Heart left ventricle (tissue), 16 donors: ENCODE measurements at regions of chr1 and their contacts with region 1.

Region 1: DNA sequence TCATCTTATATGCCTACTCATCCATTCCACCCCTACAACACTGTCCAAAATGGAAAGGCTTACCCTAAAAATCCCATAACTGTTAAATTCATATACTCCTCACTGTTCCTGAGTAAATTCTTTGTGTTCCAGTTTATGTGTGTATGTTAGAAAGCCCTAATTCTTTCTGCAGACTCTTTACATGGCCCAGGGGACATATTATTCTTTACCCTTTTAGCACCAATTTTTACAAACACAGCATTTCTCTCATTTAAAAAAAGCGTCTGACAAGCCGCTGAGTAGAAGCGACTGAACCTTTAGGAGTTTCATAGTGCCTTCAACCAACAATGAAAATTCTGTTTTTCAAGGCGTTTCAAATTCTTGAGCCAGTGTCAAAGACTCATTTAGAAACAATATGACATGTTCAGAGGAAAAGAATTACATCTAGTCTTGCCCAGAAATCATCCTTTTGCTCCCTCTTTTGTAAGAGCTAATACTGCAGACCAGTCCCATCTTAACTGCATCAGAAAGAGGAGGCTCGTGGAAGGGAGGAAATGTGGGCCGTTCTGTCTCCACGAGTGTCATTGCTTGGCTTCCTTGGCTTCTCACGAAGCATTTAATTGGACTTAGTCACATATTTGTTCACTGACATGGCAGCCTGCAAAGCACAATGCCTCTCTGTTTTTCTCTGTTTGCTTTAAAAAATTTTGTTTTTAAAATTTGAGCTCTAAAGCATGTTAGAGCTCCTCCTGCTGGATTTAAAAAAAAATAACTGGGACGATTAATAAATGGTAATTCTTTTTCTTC is 21.3 kb upstream of the C1orf105 start:
- DNase-seq: peak in 4 of 5 donors; percentile 41 to 66 (median 54)
- ATAC-seq: peak; percentile 70 to 90 (median 86)
- H3K4me3 ChIP-seq: peak overlapping the region in 6 of 12 donors; percentile 8 to 22 (median 14)
- H3K27ac ChIP-seq: peak overlapping the region in 11 of 12 donors; percentile 19 to 78 (median 68)
- H3K4me1 ChIP-seq: peaks cover 0 to 57% (median 30%) of the 10 kb centered on the region in 12 donors
- H3K27me3 ChIP-seq: no peaks in the 10 kb centered on the region
- CTCF ChIP-seq: peak; percentile 50 to 82 (median 67)
- POLR2A ChIP-seq: no peak

Region 2: DNA sequence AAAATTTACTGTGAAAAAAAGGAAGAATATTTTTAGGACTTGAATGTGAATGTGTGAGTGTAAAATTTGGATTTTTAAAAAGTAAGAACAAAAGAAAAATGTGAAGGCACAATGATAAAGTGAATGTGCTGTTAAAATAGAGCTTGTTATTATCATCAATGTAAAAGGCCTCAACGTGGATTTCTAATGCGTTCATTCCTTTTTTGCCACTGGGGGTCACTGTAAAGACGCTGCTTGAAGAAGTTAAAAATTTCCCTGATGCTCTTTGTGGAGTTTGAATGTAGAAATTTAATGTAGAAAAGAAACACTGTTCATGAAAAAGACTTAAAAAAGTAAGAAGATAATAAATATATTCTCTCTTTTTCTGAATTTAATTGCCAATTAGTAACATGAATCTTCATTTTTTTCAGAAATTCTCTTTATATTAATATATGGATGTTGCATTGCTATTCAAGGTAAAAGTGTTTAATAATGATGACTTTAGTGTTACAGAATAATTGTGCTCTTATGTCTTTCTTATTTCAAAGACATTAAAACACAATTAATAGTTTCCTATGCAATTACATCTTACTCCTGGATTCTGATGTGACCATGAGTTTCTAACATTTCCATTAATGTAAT is 396.3 kb before region 1 on chr1:
- intact Hi-C with region 1: loop called in 4 of 10 experiments (anchors 2 to 5 kb)
- DNase-seq: peak in 1 of 5 donors; percentile 14
- ATAC-seq: no peak
- H3K4me3 ChIP-seq: no peak overlapping the region
- H3K27ac ChIP-seq: no peak overlapping the region
- H3K4me1 ChIP-seq: no peaks in the 10 kb centered on the region
- H3K27me3 ChIP-seq: no peaks in the 10 kb centered on the region
- CTCF ChIP-seq: peak; percentile 41 to 79 (median 62)
- POLR2A ChIP-seq: no peak

Region 3: GRCh38 chr1:172089768-172090510 is 309.2 kb before region 1 on chr1:
- intact Hi-C with region 1: loop called (anchors 1 to 5 kb)
- DNase-seq: peak; percentile 14 to 61 (median 43)
- ATAC-seq: peak; percentile 64 to 85 (median 76)
- H3K4me3 ChIP-seq: no peak overlapping the region
- H3K27ac ChIP-seq: no peak overlapping the region
- H3K4me1 ChIP-seq: no peaks in the 10 kb centered on the region
- H3K27me3 ChIP-seq: no peaks in the 10 kb centered on the region
- CTCF ChIP-seq: peak; percentile 43 to 74 (median 66)
- POLR2A ChIP-seq: no peak

Region 4: GRCh38 chr1:172144445-172145061 is 254.6 kb before region 1 on chr1:
- intact Hi-C with region 1: loop called in 6 of 10 experiments (anchors 2 to 10 kb)
- DNase-seq: peak; percentile 80 to 87 (median 85)
- ATAC-seq: peak; percentile 95 to 96 (median 96)
- H3K4me3 ChIP-seq: peak overlapping the region; percentile 25 to 70 (median 56)
- H3K27ac ChIP-seq: peak overlapping the region; percentile 70 to 89 (median 84)
- H3K4me1 ChIP-seq: peaks cover 0 to 39% (median 5%) of the 10 kb centered on the region in 12 donors
- H3K27me3 ChIP-seq: no peaks in the 10 kb centered on the region
- CTCF ChIP-seq: no peak
- POLR2A ChIP-seq: peak in 1 of 2 donors; percentile 86

Region 5: DNA sequence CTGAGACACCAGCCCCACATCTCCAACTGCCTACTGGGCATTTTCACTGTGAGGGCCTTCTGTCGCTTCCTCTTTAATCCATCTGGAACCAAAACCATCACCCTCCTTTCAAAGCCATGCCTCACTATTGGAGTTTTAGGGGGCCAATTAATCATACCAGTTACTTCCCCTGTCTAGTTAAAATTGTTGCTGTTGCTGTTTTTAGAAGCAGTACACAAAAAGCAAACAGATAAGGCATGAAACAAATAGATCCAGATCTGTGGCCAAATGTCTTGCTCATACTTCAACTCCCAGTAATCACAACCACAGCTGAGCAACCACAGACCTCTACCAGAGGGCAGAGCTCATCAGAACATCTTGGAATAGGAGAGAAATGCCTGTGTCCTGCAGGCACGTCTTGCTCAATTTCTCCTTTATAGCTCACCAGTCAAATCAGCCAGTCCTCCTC is 112.5 kb before region 1 on chr1:
- intact Hi-C with region 1: loop called in 2 of 10 experiments (anchors 10 kb)
- DNase-seq: peak in 1 of 5 donors; percentile 41
- ATAC-seq: peak; percentile 59 to 92 (median 76)
- H3K4me3 ChIP-seq: no peak overlapping the region
- H3K27ac ChIP-seq: peak overlapping the region in 9 of 12 donors; percentile 3 to 77 (median 35)
- H3K4me1 ChIP-seq: peaks cover 0 to 23% (median 12%) of the 10 kb centered on the region in 12 donors
- H3K27me3 ChIP-seq: no peaks in the 10 kb centered on the region
- CTCF ChIP-seq: no peak
- POLR2A ChIP-seq: no peak

Region 6: DNA sequence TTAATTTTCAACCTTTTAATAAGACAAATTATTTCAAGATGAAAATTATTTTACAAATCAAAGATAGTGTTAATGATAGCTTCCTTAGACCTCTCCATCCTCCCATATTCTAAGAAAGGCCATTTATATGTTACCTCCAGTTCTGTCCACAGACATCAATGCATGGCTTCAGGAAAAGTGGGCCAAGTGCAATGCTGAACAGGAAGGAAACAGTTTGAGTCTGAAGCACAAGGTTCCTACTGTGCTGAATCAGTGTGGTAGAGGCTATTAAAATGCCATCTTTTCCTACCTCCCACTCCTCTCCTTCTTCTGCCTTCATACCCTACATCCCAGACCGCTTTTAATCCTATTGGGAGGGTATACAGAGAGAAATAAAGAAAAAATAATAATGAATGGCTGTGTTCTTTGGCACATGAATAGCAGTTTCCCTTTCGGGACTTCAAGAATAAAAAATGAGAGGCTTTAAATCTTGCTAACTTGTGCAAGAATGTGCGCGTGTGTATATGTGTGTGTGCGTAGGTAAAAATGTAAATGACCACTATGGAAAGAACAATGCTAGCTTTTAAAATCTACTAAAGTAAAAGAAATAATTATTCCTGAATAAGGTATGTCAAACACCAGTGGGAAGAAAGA is 41.3 kb before region 1 on chr1:
- intact Hi-C with region 1: loop called in 5 of 10 experiments (anchors 2 to 5 kb)
- DNase-seq: no peak
- ATAC-seq: peak in 2 of 4 donors; percentile 5 to 26
- H3K4me3 ChIP-seq: peak overlapping the region in 7 of 12 donors; percentile 0 to 37 (median 12)
- H3K27ac ChIP-seq: peak overlapping the region; percentile 42 to 91 (median 76)
- H3K4me1 ChIP-seq: peaks cover 6 to 63% (median 39%) of the 10 kb centered on the region in 12 donors
- H3K27me3 ChIP-seq: no peaks in the 10 kb centered on the region
- CTCF ChIP-seq: no peak
- POLR2A ChIP-seq: no peak

Region 7: GRCh38 chr1:172561252-172561651 is 162.1 kb after region 1 on chr1:
- intact Hi-C with region 1: no loop called
- DNase-seq: no peak
- ATAC-seq: no peak
- H3K4me3 ChIP-seq: no peak overlapping the region
- H3K27ac ChIP-seq: no peak overlapping the region
- H3K4me1 ChIP-seq: no peaks in the 10 kb centered on the region
- H3K27me3 ChIP-seq: no peaks in the 10 kb centered on the region
- CTCF ChIP-seq: no peak
- POLR2A ChIP-seq: no peak